Psoas muscle (tissue), 8 donors: ENCODE measurements at regions of chr2 and their contacts with region 1.

Region 1: GRCh38 chr2:64474121-64474571 is 20.2 kb downstream of the LGALSL start:
- DNase-seq: no peak
- ATAC-seq: no peak
- H3K4me3 ChIP-seq: no peak overlapping the region
- H3K27ac ChIP-seq: no peak overlapping the region
- H3K4me1 ChIP-seq: no peaks in the 10 kb centered on the region
- H3K27me3 ChIP-seq: no peaks in the 10 kb centered on the region
- CTCF ChIP-seq: no peak

Region 2: GRCh38 chr2:64396551-64396950 is 77.6 kb before region 1 on chr2:
- intact Hi-C with region 1: loop called in 1 of 2 experiments (anchors 5 kb)
- DNase-seq: no peak
- ATAC-seq: no peak
- H3K4me3 ChIP-seq: no peak overlapping the region
- H3K27ac ChIP-seq: no peak overlapping the region
- H3K4me1 ChIP-seq: peaks cover 16% of the 10 kb centered on the region
- H3K27me3 ChIP-seq: no peaks in the 10 kb centered on the region
- CTCF ChIP-seq: no peak